Activated B cell treated with CpG ODN at 0.5 μM for 24 hours (primary cell): ENCODE measurements at regions of chr3 and their contacts with region 1.

Region 1: DNA sequence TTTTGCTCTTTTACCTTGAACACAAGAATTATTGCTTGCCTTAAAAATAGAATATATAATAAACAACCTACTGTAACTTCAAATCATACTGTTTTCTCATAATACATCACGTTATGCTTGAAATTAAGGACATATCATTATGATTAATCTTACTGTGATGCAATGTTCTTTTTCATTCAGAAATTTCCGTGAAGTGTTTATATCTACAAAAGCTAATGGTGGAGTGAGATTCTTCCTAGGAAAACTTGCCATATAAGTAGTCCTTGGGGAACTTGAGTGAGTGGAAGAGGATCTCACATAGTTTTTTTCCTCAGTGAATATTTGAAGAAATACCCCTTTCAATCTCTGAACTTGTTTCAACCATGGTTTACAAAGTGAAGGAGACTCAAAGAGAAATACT is 498.7 kb upstream of the CBLB start:
- DNase-seq: no peak
- ATAC-seq: no peak
- H3K4me3 Mint-ChIP-seq: no peak overlapping the region
- H3K27ac Mint-ChIP-seq: no peak overlapping the region
- H3K4me1 Mint-ChIP-seq: peaks cover 5% of the 10 kb centered on the region
- H3K27me3 Mint-ChIP-seq: peaks cover 1% of the 10 kb centered on the region
- CTCF ChIP-seq: no peak

Region 2: DNA sequence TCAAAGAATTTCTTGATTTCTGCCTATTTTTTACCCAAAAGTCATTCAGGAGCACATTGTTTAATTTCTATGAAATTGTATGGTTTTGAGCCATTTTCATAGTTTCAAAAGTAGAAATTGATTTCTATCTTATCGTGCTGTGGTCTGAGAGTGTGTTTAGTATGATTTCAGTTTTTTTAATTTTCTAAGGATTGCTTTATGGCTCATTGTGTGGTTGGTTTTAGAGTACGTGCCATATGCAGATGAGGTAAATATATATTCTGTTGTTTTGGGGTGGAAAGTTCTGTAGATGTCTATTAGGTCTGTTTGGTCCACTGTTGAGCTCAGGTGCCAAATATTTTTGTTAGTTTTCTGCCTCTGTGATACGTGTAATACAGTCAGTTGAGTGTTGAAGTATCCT is 11.6 kb before region 1 on chr3:
- CTCF ChIA-PET with region 1: no interaction called
- POLR2A ChIA-PET with region 1: no interaction called
- intact Hi-C with region 1: no loop called
- DNase-seq: no peak
- ATAC-seq: no peak
- H3K4me3 Mint-ChIP-seq: no peak overlapping the region
- H3K27ac Mint-ChIP-seq: no peak overlapping the region
- H3K4me1 Mint-ChIP-seq: peaks cover 4% of the 10 kb centered on the region
- H3K27me3 Mint-ChIP-seq: no peaks in the 10 kb centered on the region
- CTCF ChIP-seq: no peak

Region 3: GRCh38 chr3:106552351-106553043 is 185.0 kb after region 1 on chr3:
- CTCF ChIA-PET with region 1: no interaction called
- POLR2A ChIA-PET with region 1: no interaction called
- intact Hi-C with region 1: loop called (anchors 10 kb)
- DNase-seq: no peak
- ATAC-seq: no peak
- H3K4me3 Mint-ChIP-seq: no peak overlapping the region
- H3K27ac Mint-ChIP-seq: no peak overlapping the region
- H3K4me1 Mint-ChIP-seq: no peaks in the 10 kb centered on the region
- H3K27me3 Mint-ChIP-seq: no peaks in the 10 kb centered on the region
- CTCF ChIP-seq: no peak